ENCODE measurements at regions of chr11 and their contacts with region 1.

Region 1: DNA sequence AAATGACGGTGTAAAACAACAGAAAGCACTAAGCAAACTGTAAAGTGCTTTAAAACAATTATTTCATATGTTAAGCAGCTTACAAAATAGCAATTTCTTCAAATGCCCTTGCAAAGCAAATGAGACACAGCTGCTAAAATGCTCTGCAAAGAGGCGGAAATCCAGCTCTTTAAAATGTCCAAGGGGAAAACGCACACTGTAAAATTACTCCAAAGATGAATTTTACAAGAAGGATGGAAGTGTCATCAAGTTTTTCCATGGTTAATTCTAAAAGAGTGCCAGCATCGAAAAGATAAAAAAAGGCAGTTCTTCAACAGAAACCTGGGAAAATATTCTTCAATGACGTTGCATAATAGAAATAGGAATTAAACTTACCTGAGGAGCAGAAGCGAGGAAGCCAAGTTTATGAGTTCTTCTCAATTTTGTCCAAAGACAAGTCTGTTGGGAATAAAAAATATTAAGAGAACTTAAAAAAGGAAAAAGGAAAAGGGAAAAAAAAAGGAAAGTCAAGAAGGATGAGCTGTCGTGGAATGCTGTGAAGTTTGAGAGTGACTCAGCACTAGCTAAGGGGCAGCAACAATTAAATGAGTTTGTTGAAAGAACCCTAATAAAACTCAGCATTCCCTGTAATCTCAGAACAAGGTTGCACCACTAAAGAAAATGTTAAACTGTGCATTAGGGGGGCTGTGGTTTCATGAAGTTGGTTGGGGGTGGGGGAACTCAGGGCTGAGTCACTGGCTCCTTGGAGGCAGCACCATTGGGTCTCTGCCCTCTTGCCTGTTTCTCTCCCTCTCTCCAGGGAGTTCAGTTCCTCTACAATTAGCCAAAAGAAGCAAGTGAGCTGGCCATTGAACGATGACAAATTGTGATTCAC is 64.2 kb upstream of the BLID start:
- DNase-seq: peak; percentile 95
- ATAC-seq: peak; percentile 95
- H3K4me3 ChIP-seq: peak overlapping the region; percentile 26 to 41
- H3K27ac ChIP-seq: peak overlapping the region; percentile 89
- H3K4me1 ChIP-seq: peaks cover 27% of the 10 kb centered on the region
- H3K27me3 ChIP-seq: no peaks in the 10 kb centered on the region
- CTCF ChIP-seq: no peak

Region 2: GRCh38 chr11:121936781-121937447 is 243.3 kb before region 1 on chr11:
- CTCF ChIA-PET with region 1: no interaction called
- POLR2A ChIA-PET with region 1: interaction called, 19 read pairs
- in situ Hi-C with region 1: no loop called
- intact Hi-C with region 1: no loop called
- DNase-seq: no peak
- ATAC-seq: no peak
- H3K4me3 ChIP-seq: no peak overlapping the region
- H3K27ac ChIP-seq: no peak overlapping the region
- H3K4me1 ChIP-seq: no peaks in the 10 kb centered on the region
- H3K27me3 ChIP-seq: no peaks in the 10 kb centered on the region
- CTCF ChIP-seq: no peak

Region 3: GRCh38 chr11:122154227-122154626 is 26.0 kb before region 1 on chr11:
- CTCF ChIA-PET with region 1: no interaction called
- POLR2A ChIA-PET with region 1: interaction called, 18 read pairs
- in situ Hi-C with region 1: no loop called
- intact Hi-C with region 1: no loop called
- DNase-seq: no peak
- ATAC-seq: no peak
- H3K4me3 ChIP-seq: peak overlapping the region; percentile 44 to 73
- H3K27ac ChIP-seq: peak overlapping the region; percentile 98
- H3K4me1 ChIP-seq: peaks cover 59% of the 10 kb centered on the region
- H3K27me3 ChIP-seq: no peaks in the 10 kb centered on the region
- CTCF ChIP-seq: no peak

Measured in Panc1 (cell line).